Calu3 (cell line): ENCODE measurements at regions of chr6 and their contacts with region 1.

Region 1: GRCh38 chr6:1131285-1132079 is 180.4 kb upstream of the FOXQ1 start:
- DNase-seq: peak; percentile 70
- H3K4me3 Mint-ChIP-seq: peak overlapping the region; percentile 3
- H3K27ac Mint-ChIP-seq: peak overlapping the region; percentile 19
- H3K4me1 Mint-ChIP-seq: peaks cover 40% of the 10 kb centered on the region
- H3K27me3 Mint-ChIP-seq: no peaks in the 10 kb centered on the region
- CTCF ChIP-seq: no peak

Region 2: DNA sequence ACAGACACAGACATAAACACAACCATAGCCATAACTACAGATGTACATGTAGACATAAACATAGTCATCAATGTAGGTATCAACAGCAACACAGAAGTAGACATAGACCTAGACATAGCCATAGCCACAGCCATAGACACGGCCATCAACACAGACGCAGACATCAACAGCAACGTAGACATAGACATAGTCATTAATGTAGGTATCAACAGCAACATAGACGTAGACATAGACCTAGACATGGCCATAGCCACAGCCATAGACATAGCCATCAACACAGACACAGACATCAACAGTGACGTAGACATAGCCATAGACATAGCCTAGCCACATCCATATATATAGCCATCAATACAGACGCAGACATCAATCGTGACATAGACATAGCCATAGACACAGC is 77.9 kb before region 1 on chr6:
- CTCF ChIA-PET with region 1: no interaction called
- intact Hi-C with region 1: loop called (anchors 5 kb)
- DNase-seq: no peak
- H3K4me3 Mint-ChIP-seq: no peak overlapping the region
- H3K27ac Mint-ChIP-seq: no peak overlapping the region
- H3K4me1 Mint-ChIP-seq: peaks cover 14% of the 10 kb centered on the region
- H3K27me3 Mint-ChIP-seq: no peaks in the 10 kb centered on the region
- CTCF ChIP-seq: no peak

Region 3: GRCh38 chr6:1162367-1163275 is 31.1 kb after region 1 on chr6:
- CTCF ChIA-PET with region 1: no interaction called
- intact Hi-C with region 1: no loop called
- DNase-seq: no peak
- H3K4me3 Mint-ChIP-seq: peak overlapping the region; percentile 47
- H3K27ac Mint-ChIP-seq: no peak overlapping the region
- H3K4me1 Mint-ChIP-seq: peaks cover 23% of the 10 kb centered on the region
- H3K27me3 Mint-ChIP-seq: no peaks in the 10 kb centered on the region
- CTCF ChIP-seq: no peak

Region 4: GRCh38 chr6:1381481-1382330 is 250.2 kb after region 1 on chr6:
- CTCF ChIA-PET with region 1: no interaction called
- intact Hi-C with region 1: no loop called
- DNase-seq: peak; percentile 79
- H3K4me3 Mint-ChIP-seq: peak overlapping the region; percentile 28
- H3K27ac Mint-ChIP-seq: no peak overlapping the region
- H3K4me1 Mint-ChIP-seq: no peaks in the 10 kb centered on the region
- H3K27me3 Mint-ChIP-seq: peaks cover 65% of the 10 kb centered on the region
- CTCF ChIP-seq: peak; percentile 88